ENCODE measurements at regions of chr4 and their contacts with region 1.

Region 1: GRCh38 chr4:100093091-100093866 is 97.0 kb downstream of the DDIT4L start:
- DNase-seq: peak; percentile 76
- H3K4me3 ChIP-seq: no peak overlapping the region
- H3K27ac ChIP-seq: no peak overlapping the region
- H3K4me1 ChIP-seq: no peaks in the 10 kb centered on the region
- CTCF ChIP-seq: peak; percentile 91

Region 2: GRCh38 chr4:100299046-100299840 is 206.0 kb after region 1 on chr4:
- CTCF ChIA-PET with region 1: no interaction called
- POLR2A ChIA-PET with region 1: no interaction called
- intact Hi-C with region 1: loop called (anchors 10 kb)
- DNase-seq: no peak
- H3K4me3 ChIP-seq: no peak overlapping the region
- H3K27ac ChIP-seq: no peak overlapping the region
- H3K4me1 ChIP-seq: no peaks in the 10 kb centered on the region
- CTCF ChIP-seq: no peak